CD8-positive, alpha-beta T cell (primary cell): ENCODE measurements at regions of chr18 and their contacts with region 1.

Region 1: GRCh38 chr18:26226229-26227005 is at the start of gene TAF4B:
- DNase-seq: peak; percentile 85 to 95 (median 92)
- ATAC-seq: peak; percentile 87
- H3K4me3 ChIP-seq: peak within 1 kb of the TSS; percentile 63 to 69
- H3K4me3 Mint-ChIP-seq: peak within 1 kb of the TSS; percentile 96
- H3K27ac ChIP-seq: peak within 1 kb of the TSS; percentile 81 to 82
- H3K27ac Mint-ChIP-seq: peak within 1 kb of the TSS; percentile 98
- H3K4me1 ChIP-seq: peaks cover 14% of the 10 kb centered on the region
- H3K4me1 Mint-ChIP-seq: peaks cover 35% of the 10 kb centered on the region
- H3K27me3 ChIP-seq: no peaks in the 10 kb centered on the region
- H3K27me3 Mint-ChIP-seq: no peaks in the 10 kb centered on the region
- CTCF ChIP-seq: no peak
- total RNA-seq, gene TAF4B: 11.5 to 12.3 TPM

Region 2: GRCh38 chr18:25516747-25517498 is 709.5 kb before region 1 on chr18:
- CTCF ChIA-PET with region 1: no interaction called
- POLR2A ChIA-PET with region 1: no interaction called
- intact Hi-C with region 1: no loop called
- DNase-seq: no peak
- ATAC-seq: no peak
- H3K4me3 ChIP-seq: no peak overlapping the region
- H3K4me3 Mint-ChIP-seq: no peak overlapping the region
- H3K27ac ChIP-seq: no peak overlapping the region
- H3K27ac Mint-ChIP-seq: no peak overlapping the region
- H3K4me1 ChIP-seq: no peaks in the 10 kb centered on the region
- H3K4me1 Mint-ChIP-seq: no peaks in the 10 kb centered on the region
- H3K27me3 ChIP-seq: no peaks in the 10 kb centered on the region
- H3K27me3 Mint-ChIP-seq: no peaks in the 10 kb centered on the region
- CTCF ChIP-seq: no peak

Region 3: DNA sequence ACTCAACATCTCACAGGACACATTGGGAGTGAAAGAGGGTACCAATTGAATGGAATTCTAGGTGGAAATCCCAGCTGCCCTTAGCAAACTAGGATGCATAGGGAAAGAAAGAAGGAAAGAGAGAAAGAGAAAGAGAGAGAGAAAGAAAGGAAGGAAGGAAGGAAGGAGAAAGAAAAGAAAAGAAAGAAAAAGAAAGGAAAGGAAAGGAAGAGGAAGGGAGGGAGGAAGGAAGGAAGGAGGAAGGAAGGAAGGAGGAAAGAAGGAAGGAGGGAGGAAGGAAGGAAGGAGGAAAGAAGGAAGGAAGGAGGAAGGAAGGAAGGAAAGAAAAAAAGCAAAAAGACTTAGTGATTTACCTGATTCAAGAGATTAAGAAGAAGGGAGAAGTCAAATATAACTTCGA is 279.9 kb before region 1 on chr18:
- CTCF ChIA-PET with region 1: no interaction called
- POLR2A ChIA-PET with region 1: no interaction called
- intact Hi-C with region 1: no loop called
- DNase-seq: no peak
- ATAC-seq: no peak
- H3K4me3 ChIP-seq: no peak overlapping the region
- H3K4me3 Mint-ChIP-seq: no peak overlapping the region
- H3K27ac ChIP-seq: no peak overlapping the region
- H3K27ac Mint-ChIP-seq: no peak overlapping the region
- H3K4me1 ChIP-seq: no peaks in the 10 kb centered on the region
- H3K4me1 Mint-ChIP-seq: no peaks in the 10 kb centered on the region
- H3K27me3 ChIP-seq: no peaks in the 10 kb centered on the region
- H3K27me3 Mint-ChIP-seq: peaks cover 3% of the 10 kb centered on the region
- CTCF ChIP-seq: no peak

Region 4: GRCh38 chr18:26185267-26185666 is 41.1 kb before region 1 on chr18:
- CTCF ChIA-PET with region 1: interaction called, 3 read pairs
- POLR2A ChIA-PET with region 1: interaction called, 3 read pairs
- intact Hi-C with region 1: loop called in 1 of 2 experiments (anchors 5 kb)
- DNase-seq: no peak
- ATAC-seq: no peak
- H3K4me3 ChIP-seq: no peak overlapping the region
- H3K4me3 Mint-ChIP-seq: no peak overlapping the region
- H3K27ac ChIP-seq: no peak overlapping the region
- H3K27ac Mint-ChIP-seq: no peak overlapping the region
- H3K4me1 ChIP-seq: peaks cover 4% of the 10 kb centered on the region
- H3K4me1 Mint-ChIP-seq: peaks cover 14% of the 10 kb centered on the region
- H3K27me3 ChIP-seq: no peaks in the 10 kb centered on the region
- H3K27me3 Mint-ChIP-seq: no peaks in the 10 kb centered on the region
- CTCF ChIP-seq: no peak

Region 5: GRCh38 chr18:26190506-26190905 is 35.9 kb before region 1 on chr18:
- CTCF ChIA-PET with region 1: interaction called, 3 read pairs
- POLR2A ChIA-PET with region 1: interaction called, 3 read pairs
- intact Hi-C with region 1: loop called (anchors 1 to 5 kb)
- DNase-seq: peak in 8 of 9 experiments; percentile 2 to 69 (median 37)
- ATAC-seq: peak; percentile 90
- H3K4me3 ChIP-seq: peak overlapping the region; percentile 24 to 40
- H3K4me3 Mint-ChIP-seq: peak overlapping the region; percentile 81
- H3K27ac ChIP-seq: peak overlapping the region; percentile 35 to 52
- H3K27ac Mint-ChIP-seq: peak overlapping the region; percentile 89
- H3K4me1 ChIP-seq: peaks cover 4% of the 10 kb centered on the region
- H3K4me1 Mint-ChIP-seq: peaks cover 25% of the 10 kb centered on the region
- H3K27me3 ChIP-seq: no peaks in the 10 kb centered on the region
- H3K27me3 Mint-ChIP-seq: no peaks in the 10 kb centered on the region
- CTCF ChIP-seq: no peak

Region 6: DNA sequence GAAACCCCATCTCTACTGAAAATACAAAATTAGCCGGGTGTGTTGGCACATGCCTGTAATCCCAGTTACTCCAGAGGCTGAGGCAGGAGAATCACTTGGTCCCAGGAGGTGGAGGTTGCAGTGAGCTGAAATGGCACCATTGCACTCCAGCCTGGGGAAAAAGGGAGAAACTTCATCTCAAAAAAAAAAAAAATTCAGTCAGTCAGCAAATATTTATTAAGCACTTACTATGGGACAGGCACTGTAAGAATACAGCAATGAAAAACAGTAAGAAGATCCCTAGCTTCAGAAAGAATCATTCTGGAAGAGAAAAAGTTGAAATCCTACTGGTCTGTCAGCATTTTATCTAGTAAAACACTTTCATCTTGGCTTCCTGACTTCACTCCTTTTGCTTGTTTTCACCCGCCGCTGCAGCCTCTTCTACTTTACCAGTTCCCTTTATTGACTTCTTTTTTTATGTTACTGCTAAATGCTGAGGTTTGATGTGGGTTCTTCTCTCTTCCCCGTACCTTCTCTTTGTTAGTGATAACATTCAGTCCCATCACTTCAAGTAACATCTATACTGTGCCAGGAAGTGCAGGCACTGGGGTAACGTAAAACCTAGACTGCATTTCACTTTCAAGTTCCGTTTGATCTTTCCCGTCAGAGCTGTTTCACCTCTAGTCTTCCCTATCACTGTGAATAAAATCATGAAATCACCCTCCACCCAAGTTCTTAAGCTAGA is 11.0 kb before region 1 on chr18:
- CTCF ChIA-PET with region 1: interaction called, 4 read pairs
- POLR2A ChIA-PET with region 1: interaction called, 8 read pairs
- intact Hi-C with region 1: loop called in 1 of 2 experiments (anchors 1 kb)
- DNase-seq: peak; percentile 2 to 87 (median 50)
- ATAC-seq: peak; percentile 96
- H3K4me3 ChIP-seq: peak overlapping the region in 1 of 2 experiments; percentile 20
- H3K4me3 Mint-ChIP-seq: peak overlapping the region; percentile 62
- H3K27ac ChIP-seq: peak overlapping the region in 1 of 2 experiments; percentile 57
- H3K27ac Mint-ChIP-seq: peak overlapping the region; percentile 79
- H3K4me1 ChIP-seq: peaks cover 19% of the 10 kb centered on the region
- H3K4me1 Mint-ChIP-seq: peaks cover 33% of the 10 kb centered on the region
- H3K27me3 ChIP-seq: no peaks in the 10 kb centered on the region
- H3K27me3 Mint-ChIP-seq: no peaks in the 10 kb centered on the region
- CTCF ChIP-seq: no peak